CD4-positive, alpha-beta memory T cell (primary cell): ENCODE measurements at regions of chr5 and their contacts with region 1.

Region 1: GRCh38 chr5:133287500-133287899 is 235.7 kb downstream of the HSPA4 start:
- DNase-seq: peak in 3 of 5 donors; percentile 12 to 26 (median 17)
- H3K4me3 ChIP-seq: no peak overlapping the region
- H3K4me3 Mint-ChIP-seq: no peak overlapping the region
- H3K27ac ChIP-seq: no peak overlapping the region
- H3K27ac Mint-ChIP-seq: peak overlapping the region in 1 of 7 donors; percentile 1
- H3K4me1 ChIP-seq: no peaks in the 10 kb centered on the region
- H3K4me1 Mint-ChIP-seq: no peaks in the 10 kb centered on the region
- H3K27me3 ChIP-seq: no peaks in the 10 kb centered on the region
- H3K27me3 Mint-ChIP-seq: no peaks in the 10 kb centered on the region

Region 2: DNA sequence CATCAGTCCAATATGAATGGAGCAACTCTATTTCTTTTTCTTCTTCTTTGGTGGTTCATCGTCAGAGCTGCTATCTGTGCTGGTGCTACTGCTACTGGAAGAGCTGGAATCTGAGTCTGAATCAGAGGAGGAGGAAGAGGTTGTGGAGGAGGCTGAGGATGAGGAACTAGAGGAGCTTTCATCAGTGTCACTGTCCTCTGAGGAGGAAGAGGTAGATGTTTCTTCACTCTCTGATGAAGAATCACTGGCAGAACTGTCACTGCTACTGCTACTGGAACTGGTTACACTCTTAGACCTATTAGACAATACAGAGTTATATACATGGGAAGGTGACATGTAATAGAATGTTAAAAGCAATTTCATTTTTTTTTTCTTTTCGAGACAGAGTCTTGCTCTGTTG is 288.9 kb before region 1 on chr5:
- CTCF ChIA-PET with region 1: no interaction called
- POLR2A ChIA-PET with region 1: no interaction called
- intact Hi-C with region 1: no loop called
- DNase-seq: no peak
- H3K4me3 ChIP-seq: no peak overlapping the region
- H3K4me3 Mint-ChIP-seq: no peak overlapping the region
- H3K27ac ChIP-seq: no peak overlapping the region
- H3K27ac Mint-ChIP-seq: peak overlapping the region in 3 of 7 donors; percentile 0 to 59 (median 2)
- H3K4me1 ChIP-seq: no peaks in the 10 kb centered on the region
- H3K4me1 Mint-ChIP-seq: no peaks in the 10 kb centered on the region
- H3K27me3 ChIP-seq: no peaks in the 10 kb centered on the region
- H3K27me3 Mint-ChIP-seq: no peaks in the 10 kb centered on the region

Region 3: GRCh38 chr5:133062276-133062675 is 225.2 kb before region 1 on chr5:
- CTCF ChIA-PET with region 1: no interaction called
- POLR2A ChIA-PET with region 1: no interaction called
- intact Hi-C with region 1: no loop called
- DNase-seq: no peak
- H3K4me3 ChIP-seq: no peak overlapping the region
- H3K4me3 Mint-ChIP-seq: peak overlapping the region in 4 of 8 donors; percentile 29 to 62 (median 43)
- H3K27ac ChIP-seq: no peak overlapping the region
- H3K27ac Mint-ChIP-seq: peak overlapping the region; percentile 1 to 83 (median 41)
- H3K4me1 ChIP-seq: peaks cover 42% of the 10 kb centered on the region
- H3K4me1 Mint-ChIP-seq: peaks cover 26 to 52% (median 38%) of the 10 kb centered on the region in 4 donors
- H3K27me3 ChIP-seq: no peaks in the 10 kb centered on the region
- H3K27me3 Mint-ChIP-seq: no peaks in the 10 kb centered on the region

Region 4: DNA sequence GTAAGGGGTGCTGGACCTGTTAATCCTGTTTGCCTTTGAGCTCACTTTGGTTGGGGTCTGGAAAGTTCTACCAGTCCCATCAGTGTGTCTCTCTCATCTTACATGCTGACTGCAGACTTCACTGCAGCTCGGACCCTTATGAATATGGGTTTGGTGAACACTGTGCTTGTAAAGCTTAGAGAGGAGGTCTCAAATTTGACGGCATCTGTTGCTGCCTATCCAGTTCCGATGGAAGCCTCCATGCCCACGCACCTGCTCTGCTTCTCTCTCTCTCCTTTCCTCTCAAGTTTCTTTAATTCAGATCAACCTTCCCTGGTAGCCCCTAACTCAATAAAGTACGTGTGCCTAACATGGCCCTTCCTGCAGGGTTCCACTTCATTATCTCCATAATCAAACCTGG is 17.8 kb before region 1 on chr5:
- CTCF ChIA-PET with region 1: no interaction called
- POLR2A ChIA-PET with region 1: no interaction called
- intact Hi-C with region 1: no loop called
- DNase-seq: no peak
- H3K4me3 ChIP-seq: no peak overlapping the region
- H3K4me3 Mint-ChIP-seq: no peak overlapping the region
- H3K27ac ChIP-seq: no peak overlapping the region
- H3K27ac Mint-ChIP-seq: no peak overlapping the region
- H3K4me1 ChIP-seq: no peaks in the 10 kb centered on the region
- H3K4me1 Mint-ChIP-seq: no peaks in the 10 kb centered on the region
- H3K27me3 ChIP-seq: no peaks in the 10 kb centered on the region
- H3K27me3 Mint-ChIP-seq: no peaks in the 10 kb centered on the region

Region 5: DNA sequence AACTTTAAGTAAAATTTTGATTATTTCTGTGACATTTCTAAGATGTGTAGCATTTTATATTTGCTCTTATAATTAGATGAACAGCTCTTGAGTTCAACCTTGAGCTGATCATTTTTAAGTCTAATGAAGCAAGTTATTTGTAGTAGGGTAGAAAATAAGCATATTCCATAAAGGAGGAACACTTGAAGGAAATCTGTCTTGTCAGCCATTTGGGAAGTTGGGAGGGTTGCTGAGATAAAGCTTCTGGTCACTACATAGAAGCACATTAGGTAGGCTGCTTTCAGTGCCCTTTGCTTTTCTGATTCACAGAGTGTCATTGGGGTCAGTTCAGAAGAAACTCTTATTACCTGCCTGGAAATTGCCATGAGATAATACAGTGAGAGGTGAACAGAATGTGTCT is 1405.2 kb after region 1 on chr5:
- CTCF ChIA-PET with region 1: no interaction called
- POLR2A ChIA-PET with region 1: no interaction called
- intact Hi-C with region 1: loop called (anchors 10 kb)
- DNase-seq: no peak
- H3K4me3 ChIP-seq: no peak overlapping the region
- H3K4me3 Mint-ChIP-seq: no peak overlapping the region
- H3K27ac ChIP-seq: no peak overlapping the region
- H3K27ac Mint-ChIP-seq: peak overlapping the region in 1 of 7 donors; percentile 19
- H3K4me1 ChIP-seq: no peaks in the 10 kb centered on the region
- H3K4me1 Mint-ChIP-seq: no peaks in the 10 kb centered on the region
- H3K27me3 ChIP-seq: no peaks in the 10 kb centered on the region
- H3K27me3 Mint-ChIP-seq: no peaks in the 10 kb centered on the region